Right cardiac atrium (tissue), 5 donors: ENCODE measurements at regions of chr5 and their contacts with region 1.

Region 1: GRCh38 chr5:112921833-112922817 is at the start of gene REEP5:
- DNase-seq: peak; percentile 88 to 95 (median 95)
- ATAC-seq: peak; percentile 95 to 96
- H3K4me3 ChIP-seq: peak within 1 kb of the TSS; percentile 71
- H3K27ac ChIP-seq: peak within 1 kb of the TSS; percentile 86
- H3K4me1 ChIP-seq: peaks cover 10% of the 10 kb centered on the region
- H3K27me3 ChIP-seq: no peaks in the 10 kb centered on the region
- total RNA-seq, gene REEP5: 103 to 119 (median 112) TPM

Region 2: GRCh38 chr5:112752335-112752734 is 169.8 kb before region 1 on chr5:
- intact Hi-C with region 1: no loop called
- DNase-seq: no peak
- ATAC-seq: no peak
- H3K4me3 ChIP-seq: no peak overlapping the region
- H3K27ac ChIP-seq: no peak overlapping the region
- H3K4me1 ChIP-seq: no peaks in the 10 kb centered on the region
- H3K27me3 ChIP-seq: no peaks in the 10 kb centered on the region

Region 3: DNA sequence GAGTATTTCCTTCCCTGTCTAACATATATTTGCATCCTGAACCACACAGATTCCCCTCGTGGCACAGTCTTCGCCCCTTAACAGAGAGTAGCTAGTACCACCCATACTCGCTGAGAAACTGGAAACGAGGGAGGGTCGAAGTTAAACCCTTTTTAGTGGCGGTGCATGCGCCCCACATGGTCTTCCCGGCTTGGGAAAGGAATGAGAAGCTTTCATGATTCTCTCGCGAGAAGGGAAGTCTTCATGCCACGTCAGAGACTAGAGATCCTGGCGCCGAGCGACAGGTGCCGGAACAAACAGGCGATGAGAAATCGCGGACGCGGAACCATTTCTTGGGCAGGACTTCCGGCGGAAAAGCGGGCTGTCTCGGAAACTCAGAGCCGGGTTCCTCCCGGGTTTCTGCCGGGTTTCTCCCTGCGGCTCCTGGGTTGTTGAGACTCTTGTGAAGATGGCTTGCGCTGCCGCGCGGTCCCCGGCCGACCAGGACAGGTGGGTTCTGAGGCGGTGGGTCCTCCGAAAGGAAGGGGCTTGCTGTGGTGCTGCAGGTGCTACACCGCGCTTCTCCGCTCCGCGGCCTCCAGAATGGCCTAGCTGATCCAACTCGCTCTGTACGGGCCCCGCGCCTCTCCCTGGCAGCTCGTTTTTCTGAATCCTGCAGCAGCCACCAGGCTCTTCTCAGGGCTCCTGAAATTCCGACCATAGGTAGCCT is 61.0 kb before region 1 on chr5 and contains the start of gene SRP19:
- intact Hi-C with region 1: loop called in 1 of 4 experiments (anchors 5 kb)
- DNase-seq: peak; percentile 95 to 97 (median 96)
- ATAC-seq: peak; percentile 97
- H3K4me3 ChIP-seq: peak within 1 kb of the TSS; percentile 98
- H3K27ac ChIP-seq: peak within 1 kb of the TSS; percentile 83
- H3K4me1 ChIP-seq: peaks cover 8% of the 10 kb centered on the region
- H3K27me3 ChIP-seq: no peaks in the 10 kb centered on the region
- total RNA-seq, gene SRP19: 21.4 to 34.4 (median 30.4) TPM

Region 4: DNA sequence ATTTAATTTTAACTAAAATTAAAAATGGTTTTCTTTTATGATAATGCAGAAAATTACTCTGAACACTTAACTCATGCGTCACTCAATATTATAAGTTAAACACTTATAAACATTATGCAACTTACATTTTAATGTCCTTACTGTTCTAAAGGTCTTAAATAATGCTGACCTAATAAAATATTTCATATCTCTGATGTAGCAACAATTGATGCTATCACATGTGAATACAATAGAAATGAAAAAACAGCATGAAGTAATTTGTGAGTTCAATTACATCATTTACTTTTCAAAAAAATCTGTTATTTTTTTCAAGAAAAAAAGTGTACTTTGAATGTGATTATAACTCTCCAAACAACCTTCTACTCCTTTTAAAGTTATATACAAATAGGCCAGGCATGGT is 26.3 kb after region 1 on chr5:
- intact Hi-C with region 1: loop called in 1 of 4 experiments (anchors 2 kb)
- DNase-seq: no peak
- ATAC-seq: no peak
- H3K4me3 ChIP-seq: no peak overlapping the region
- H3K27ac ChIP-seq: no peak overlapping the region
- H3K4me1 ChIP-seq: no peaks in the 10 kb centered on the region
- H3K27me3 ChIP-seq: no peaks in the 10 kb centered on the region

Region 5: GRCh38 chr5:112976432-112977309 is 54.5 kb after region 1 on chr5 and contains the start of gene DCP2:
- intact Hi-C with region 1: no loop called
- DNase-seq: peak; percentile 96 to 98 (median 98)
- ATAC-seq: peak; percentile 99
- H3K4me3 ChIP-seq: peak within 1 kb of the TSS; percentile 63
- H3K27ac ChIP-seq: peak within 1 kb of the TSS; percentile 90
- H3K4me1 ChIP-seq: peaks cover 2% of the 10 kb centered on the region
- H3K27me3 ChIP-seq: no peaks in the 10 kb centered on the region
- total RNA-seq, gene DCP2: 23.2 to 26.7 (median 25.9) TPM